Activated T-helper 1 cell treated with anti-CD3 and anti-CD28 coated beads, Interleukin-12 subunit alpha, Interleukin-12 subunit beta, Interleukin-2, Interleukin-4 antibody, amounts not matched to agents 30 ng/mL and 10 ng/mL and 1 ng/mL, durations not matched to agents 14 hours and 24 hours and 36 hours (primary cell): ENCODE measurements at regions of chr7 and their contacts with region 1.

Region 1: DNA sequence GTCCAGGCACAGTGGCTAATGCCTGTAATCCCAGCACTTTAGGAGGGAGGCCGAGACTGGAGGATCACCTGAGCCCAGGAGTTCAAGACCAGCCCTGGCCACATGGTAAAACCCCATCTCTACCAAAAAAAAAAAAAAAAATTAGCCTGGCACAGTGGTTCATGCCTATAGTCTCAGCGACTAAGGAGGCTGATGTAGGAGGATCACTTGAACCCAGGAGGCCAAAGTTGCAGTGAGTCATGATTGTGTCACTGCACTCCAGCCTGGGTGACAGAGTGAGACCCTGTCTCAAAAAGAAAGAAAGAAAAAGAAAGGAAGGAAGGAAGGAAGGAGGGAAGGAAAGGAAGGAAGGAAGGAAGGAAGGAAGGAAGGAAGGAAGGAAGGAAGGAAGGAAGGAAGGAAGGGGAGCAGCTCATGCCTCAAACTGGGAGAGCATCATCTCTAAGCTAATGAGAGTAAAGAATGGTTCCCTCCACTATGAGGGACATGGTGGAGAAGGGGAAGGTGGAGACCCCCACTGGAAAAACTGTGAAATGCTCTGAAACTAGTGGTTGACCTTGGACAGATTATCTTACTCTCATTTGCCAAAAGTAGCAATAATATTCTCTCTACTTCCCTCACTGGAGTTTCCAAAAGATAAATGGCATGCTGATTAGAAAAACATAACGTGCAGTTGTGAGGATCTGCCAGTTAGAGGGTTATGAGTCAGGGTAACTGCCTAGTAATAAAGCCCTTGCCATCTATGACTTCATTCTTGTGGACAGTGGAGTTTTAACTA is 16.8 kb downstream of the GIMAP5 start:
- DNase-seq: no peak
- H3K4me3 Mint-ChIP-seq: peak overlapping the region; percentile 70
- H3K27ac Mint-ChIP-seq: peak overlapping the region; percentile 98
- H3K4me1 Mint-ChIP-seq: peaks cover 68% of the 10 kb centered on the region
- H3K27me3 Mint-ChIP-seq: peaks cover 3% of the 10 kb centered on the region

Region 2: DNA sequence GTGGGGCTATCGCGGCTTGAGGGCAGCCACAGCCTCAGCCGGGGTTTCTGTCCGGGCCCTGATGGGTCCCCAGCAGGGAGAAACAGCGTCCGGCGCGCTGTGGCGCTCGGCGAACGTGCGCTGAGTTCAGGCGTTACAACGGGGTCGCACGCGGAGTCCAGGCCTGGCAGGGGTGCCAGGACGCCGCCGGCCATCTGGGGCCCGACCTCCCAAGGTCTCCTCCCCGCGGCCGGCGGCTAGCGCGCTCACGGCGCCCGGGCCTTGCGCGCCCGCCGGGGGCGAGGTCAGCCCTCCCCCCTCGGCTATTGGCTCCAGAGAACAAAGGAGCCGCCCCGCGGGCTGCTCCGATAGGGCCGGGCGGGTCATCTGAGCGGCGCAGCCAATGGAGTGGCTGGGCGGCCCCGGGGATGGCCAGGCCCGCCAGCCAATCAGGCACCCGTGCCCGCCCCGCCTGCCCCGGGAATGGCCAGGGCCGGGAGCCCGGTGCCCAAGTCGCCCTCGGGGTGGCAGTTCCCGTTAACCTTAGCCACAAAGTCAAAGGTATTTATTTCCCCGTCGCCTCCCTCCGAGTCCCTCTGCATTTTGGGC is 375.1 kb before region 1 on chr7 and contains the start of gene ZNF775:
- intact Hi-C with region 1: loop called (anchors 5 kb)
- DNase-seq: peak; percentile 93
- H3K4me3 Mint-ChIP-seq: peak within 1 kb of the TSS; percentile 90
- H3K27ac Mint-ChIP-seq: peak within 1 kb of the TSS; percentile 83
- H3K4me1 Mint-ChIP-seq: peaks cover 59% of the 10 kb centered on the region
- H3K27me3 Mint-ChIP-seq: no peaks in the 10 kb centered on the region
- total RNA-seq, gene ZNF775: 3.9 and 4.5 TPM in 2 replicates

Region 3: GRCh38 chr7:150448789-150449147 is 305.2 kb before region 1 on chr7:
- intact Hi-C with region 1: loop called (anchors 1 kb)
- DNase-seq: peak; percentile 82
- H3K4me3 Mint-ChIP-seq: peak overlapping the region; percentile 97
- H3K27ac Mint-ChIP-seq: peak overlapping the region; percentile 95
- H3K4me1 Mint-ChIP-seq: peaks cover 66% of the 10 kb centered on the region
- H3K27me3 Mint-ChIP-seq: no peaks in the 10 kb centered on the region

Region 4: GRCh38 chr7:150520145-150520544 is 233.9 kb before region 1 on chr7:
- intact Hi-C with region 1: loop called (anchors 1 kb)
- DNase-seq: peak; percentile 43
- H3K4me3 Mint-ChIP-seq: peak overlapping the region; percentile 96
- H3K27ac Mint-ChIP-seq: peak overlapping the region; percentile 93
- H3K4me1 Mint-ChIP-seq: peaks cover 65% of the 10 kb centered on the region
- H3K27me3 Mint-ChIP-seq: no peaks in the 10 kb centered on the region

Region 5: DNA sequence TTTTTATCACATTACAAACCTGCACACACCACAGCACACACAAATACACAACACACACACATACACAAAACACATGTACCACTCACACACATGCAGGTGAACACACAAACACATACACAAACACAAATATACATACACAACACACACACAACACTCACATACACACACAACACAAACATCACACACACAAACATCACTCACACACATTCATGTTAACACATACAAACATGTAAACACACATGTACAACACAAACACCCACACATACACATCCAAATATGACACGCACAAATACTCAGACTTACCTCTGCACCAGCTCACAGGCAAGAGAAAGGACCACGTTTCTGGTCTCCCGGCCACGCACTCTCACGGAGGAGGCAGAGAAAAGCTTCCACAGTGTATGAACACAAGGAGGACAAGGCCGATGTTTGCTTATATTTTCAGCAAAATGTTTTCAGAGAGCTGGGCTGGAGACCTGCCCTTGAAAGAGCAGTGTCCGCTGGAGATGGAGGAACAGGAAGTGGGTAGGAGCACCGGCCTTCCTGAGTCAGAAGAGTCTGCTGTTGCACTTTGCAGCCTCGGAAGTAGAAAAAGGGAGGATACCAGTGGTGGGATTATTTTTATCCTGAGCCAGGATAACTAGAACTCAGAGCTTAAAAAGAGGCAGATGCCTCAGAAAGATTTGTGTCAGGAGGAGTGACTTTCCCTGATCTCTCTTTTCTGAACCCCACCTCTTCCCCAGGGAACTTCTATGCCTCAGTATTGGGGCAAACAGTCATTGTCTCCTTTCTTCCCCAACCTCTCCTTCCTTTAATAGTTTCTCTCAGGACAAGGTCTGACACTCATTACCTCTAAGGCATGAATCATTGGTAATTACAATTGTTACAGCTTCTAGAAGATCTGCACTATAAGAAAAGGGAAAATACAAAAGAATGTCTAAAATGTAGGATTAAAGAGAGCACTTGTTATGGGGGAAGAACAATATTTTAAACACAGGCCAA is 121.8 kb before region 1 on chr7 and contains the start of gene GIMAP6:
- intact Hi-C with region 1: loop called (anchors 1 kb)
- DNase-seq: peak; percentile 48
- H3K4me3 Mint-ChIP-seq: peak within 1 kb of the TSS; percentile 94
- H3K27ac Mint-ChIP-seq: peak within 1 kb of the TSS; percentile 94
- H3K4me1 Mint-ChIP-seq: peaks cover 68% of the 10 kb centered on the region
- H3K27me3 Mint-ChIP-seq: no peaks in the 10 kb centered on the region
- total RNA-seq, gene GIMAP6: 38.7 and 41.3 TPM in 2 replicates

Region 6: GRCh38 chr7:150685219-150686029 is 68.6 kb before region 1 on chr7 and contains the start of gene GIMAP2:
- intact Hi-C with region 1: loop called (anchors 2 kb)
- DNase-seq: peak; percentile 39
- H3K4me3 Mint-ChIP-seq: peak within 1 kb of the TSS; percentile 93
- H3K27ac Mint-ChIP-seq: peak within 1 kb of the TSS; percentile 98
- H3K4me1 Mint-ChIP-seq: peaks cover 87% of the 10 kb centered on the region
- H3K27me3 Mint-ChIP-seq: no peaks in the 10 kb centered on the region
- total RNA-seq, gene GIMAP2: 24.7 and 29.7 TPM in 2 replicates